OCI-LY7 (cell line): ENCODE measurements at regions of chr21 and their contacts with region 1.

Region 1: DNA sequence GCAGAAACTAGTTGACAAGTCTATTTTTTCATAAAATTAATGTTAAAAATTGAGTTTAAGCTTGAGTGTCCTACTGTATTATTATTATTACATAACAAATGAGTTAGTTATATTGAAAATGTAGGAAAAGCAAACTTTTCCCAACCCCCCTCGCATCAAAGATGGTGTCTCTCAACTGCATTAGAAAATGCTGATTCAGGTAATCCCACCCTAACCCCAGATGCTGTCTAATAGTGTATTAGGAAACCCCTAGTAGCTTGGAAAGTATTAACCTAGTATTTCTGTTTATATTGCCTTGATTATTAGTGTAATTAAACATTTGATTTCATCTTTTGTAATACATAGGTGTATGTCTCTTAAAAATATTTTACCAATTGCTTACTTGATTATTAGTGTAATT is 1120.3 kb downstream of the MRPL39 start:
- DNase-seq: no peak
- H3K4me3 ChIP-seq: no peak overlapping the region
- H3K27ac ChIP-seq: no peak overlapping the region
- H3K4me1 ChIP-seq: no peaks in the 10 kb centered on the region
- CTCF ChIP-seq: no peak

Region 2: DNA sequence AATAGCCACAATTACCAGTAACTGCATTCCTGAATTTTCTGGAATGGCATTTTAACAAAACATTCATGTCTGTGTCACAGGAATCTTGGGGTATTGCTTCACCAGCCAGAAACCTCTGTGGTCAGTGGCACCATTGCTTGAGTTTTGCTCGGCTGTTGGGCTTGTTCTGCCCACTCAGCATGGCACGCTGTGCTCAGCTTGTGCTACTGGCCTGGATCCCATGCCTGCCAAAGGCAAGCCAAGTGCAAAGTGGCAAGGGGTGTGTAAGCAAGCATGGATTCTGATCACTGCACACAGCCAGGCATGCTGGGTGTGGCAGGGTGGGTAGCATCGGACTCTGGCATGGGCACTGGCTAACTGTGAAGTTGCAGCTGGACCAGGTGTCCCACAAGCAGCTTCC is 30.6 kb before region 1 on chr21:
- CTCF ChIA-PET with region 1: no interaction called
- POLR2A ChIA-PET with region 1: no interaction called
- intact Hi-C with region 1: no loop called
- DNase-seq: no peak
- H3K4me3 ChIP-seq: no peak overlapping the region
- H3K27ac ChIP-seq: no peak overlapping the region
- H3K4me1 ChIP-seq: no peaks in the 10 kb centered on the region
- CTCF ChIP-seq: no peak

Region 3: GRCh38 chr21:24948186-24948585 is 461.2 kb after region 1 on chr21:
- CTCF ChIA-PET with region 1: no interaction called
- POLR2A ChIA-PET with region 1: interaction called, 10 read pairs
- intact Hi-C with region 1: no loop called
- DNase-seq: no peak
- H3K4me3 ChIP-seq: no peak overlapping the region
- H3K27ac ChIP-seq: no peak overlapping the region
- H3K4me1 ChIP-seq: no peaks in the 10 kb centered on the region
- CTCF ChIP-seq: no peak